GM12878 (cell line): ENCODE measurements at regions of chr3 and their contacts with region 1.

Region 1: DNA sequence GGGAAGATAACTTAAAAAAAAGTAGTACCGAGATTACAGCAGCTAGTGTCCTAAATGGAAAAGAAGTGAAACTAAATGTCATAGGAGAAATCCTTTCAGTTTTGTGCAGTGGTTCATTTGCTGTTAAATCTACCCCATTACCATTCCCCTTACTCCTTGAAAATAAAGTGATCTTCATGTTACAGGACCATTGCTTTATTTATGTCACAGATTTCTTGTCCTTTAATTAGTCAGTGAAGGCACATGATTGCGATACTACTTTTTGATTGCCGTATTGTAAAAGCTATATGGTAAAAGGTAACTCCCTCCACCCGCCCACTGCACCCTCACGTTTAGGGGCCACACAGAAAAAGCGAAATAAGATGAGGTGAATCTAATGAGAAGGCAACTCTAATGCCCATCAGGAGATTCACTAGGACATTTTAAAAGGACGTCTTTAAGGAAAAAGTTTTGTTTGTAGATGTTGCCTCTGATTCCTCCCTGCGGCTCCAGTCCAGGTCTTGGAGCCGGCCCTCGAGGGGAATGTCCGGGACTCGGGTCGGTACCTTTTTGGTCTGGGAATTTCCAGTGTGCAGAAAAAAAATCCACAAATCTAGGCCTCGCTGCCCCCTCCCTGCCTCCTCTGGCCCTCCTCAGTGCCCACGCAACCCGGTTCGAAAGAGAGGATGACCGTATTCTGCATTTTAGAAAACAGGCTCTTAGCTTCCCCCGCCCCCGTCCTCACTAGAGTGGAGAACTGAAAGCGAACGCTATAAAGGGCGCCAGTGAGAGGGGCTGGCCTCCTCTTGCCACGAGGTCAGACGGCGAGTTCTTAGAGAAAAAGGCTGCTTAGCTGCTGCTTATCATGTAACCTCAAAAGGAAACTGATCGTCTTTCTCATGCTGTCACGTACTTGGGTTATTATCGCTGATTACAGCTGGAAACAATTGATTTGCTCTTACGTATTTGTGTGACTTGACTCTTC is 21.8 kb upstream of the NFKBIZ start:
- DNase-seq: peak; percentile 93
- ATAC-seq: peak; percentile 83
- H3K4me3 ChIP-seq: peak overlapping the region; percentile 78
- H3K27ac ChIP-seq: peak overlapping the region; percentile 92
- H3K4me1 ChIP-seq: peaks cover 11% of the 10 kb centered on the region
- H3K27me3 ChIP-seq: no peaks in the 10 kb centered on the region
- CTCF ChIP-seq: no peak
- EP300 ChIP-seq: peak; percentile 36 to 84
- POLR2A ChIP-seq: peak; percentile 92
- RAD21 ChIP-seq: peak; percentile 38; the same call in 1 of the 2 replicates

Region 2: GRCh38 chr3:101842245-101842934 is 14.9 kb after region 1 on chr3:
- CTCF ChIA-PET with region 1: interaction called, 9 read pairs
- POLR2A ChIA-PET with region 1: interaction called, 66 read pairs
- RAD21 ChIA-PET with region 1: interaction called, 30 read pairs
- SMC1A ChIA-PET with region 1: interaction called, 34 read pairs
- in situ Hi-C with region 1: no loop called
- intact Hi-C with region 1: no loop called
- DNase-seq: no peak
- ATAC-seq: peak; percentile 15
- H3K4me3 ChIP-seq: no peak overlapping the region
- H3K27ac ChIP-seq: peak overlapping the region; percentile 22
- H3K4me1 ChIP-seq: peaks cover 27% of the 10 kb centered on the region
- H3K27me3 ChIP-seq: no peaks in the 10 kb centered on the region
- CTCF ChIP-seq: no peak
- EP300 ChIP-seq: no peak
- POLR2A ChIP-seq: no peak
- RAD21 ChIP-seq: no peak

Region 3: GRCh38 chr3:101854621-101855304 is 27.3 kb after region 1 on chr3:
- CTCF ChIA-PET with region 1: interaction called, 9 read pairs
- POLR2A ChIA-PET with region 1: interaction called, 66 read pairs
- RAD21 ChIA-PET with region 1: interaction called, 44 read pairs
- SMC1A ChIA-PET with region 1: interaction called, 61 read pairs
- in situ Hi-C with region 1: no loop called
- intact Hi-C with region 1: loop called (anchors 1 kb)
- DNase-seq: no peak
- ATAC-seq: no peak
- H3K4me3 ChIP-seq: no peak overlapping the region
- H3K27ac ChIP-seq: no peak overlapping the region
- H3K4me1 ChIP-seq: peaks cover 17% of the 10 kb centered on the region
- H3K27me3 ChIP-seq: no peaks in the 10 kb centered on the region
- CTCF ChIP-seq: no peak
- EP300 ChIP-seq: no peak
- POLR2A ChIP-seq: no peak
- RAD21 ChIP-seq: no peak

Region 4: GRCh38 chr3:101942356-101942755 is 114.9 kb after region 1 on chr3:
- CTCF ChIA-PET with region 1: interaction called, 3 read pairs
- POLR2A ChIA-PET with region 1: interaction called, 4 read pairs
- RAD21 ChIA-PET with region 1: interaction called, 43 read pairs
- SMC1A ChIA-PET with region 1: interaction called, 6 read pairs
- in situ Hi-C with region 1: no loop called
- intact Hi-C with region 1: loop called (anchors 2 kb)
- DNase-seq: no peak
- ATAC-seq: peak; percentile 1; the same call in 2 of the 3 replicates
- H3K4me3 ChIP-seq: no peak overlapping the region
- H3K27ac ChIP-seq: peak overlapping the region; percentile 23; the same call in 1 of the 2 replicates
- H3K4me1 ChIP-seq: peaks cover 48% of the 10 kb centered on the region
- H3K27me3 ChIP-seq: no peaks in the 10 kb centered on the region
- CTCF ChIP-seq: no peak
- EP300 ChIP-seq: peak; percentile 72 to 78; a peak in 3 of 4 replicates
- POLR2A ChIP-seq: no peak
- RAD21 ChIP-seq: no peak

Region 5: GRCh38 chr3:101988591-101988990 is 161.1 kb after region 1 on chr3:
- CTCF ChIA-PET with region 1: no interaction called
- POLR2A ChIA-PET with region 1: no interaction called
- RAD21 ChIA-PET with region 1: no interaction called
- SMC1A ChIA-PET with region 1: interaction called, 11 read pairs
- in situ Hi-C with region 1: no loop called
- intact Hi-C with region 1: loop called (anchors 5 kb)
- DNase-seq: no peak
- ATAC-seq: peak; percentile 65
- H3K4me3 ChIP-seq: no peak overlapping the region
- H3K27ac ChIP-seq: peak overlapping the region; percentile 59
- H3K4me1 ChIP-seq: peaks cover 28% of the 10 kb centered on the region
- H3K27me3 ChIP-seq: no peaks in the 10 kb centered on the region
- CTCF ChIP-seq: no peak
- EP300 ChIP-seq: 0 out of 4 replicates have a peak, but pooled peaks of 1 of the 2 experiments have one; percentile 30
- POLR2A ChIP-seq: no peak
- RAD21 ChIP-seq: no peak